Breast epithelium (tissue), 4 donors: ENCODE measurements at regions of chr2 and their contacts with region 1.

Region 1: DNA sequence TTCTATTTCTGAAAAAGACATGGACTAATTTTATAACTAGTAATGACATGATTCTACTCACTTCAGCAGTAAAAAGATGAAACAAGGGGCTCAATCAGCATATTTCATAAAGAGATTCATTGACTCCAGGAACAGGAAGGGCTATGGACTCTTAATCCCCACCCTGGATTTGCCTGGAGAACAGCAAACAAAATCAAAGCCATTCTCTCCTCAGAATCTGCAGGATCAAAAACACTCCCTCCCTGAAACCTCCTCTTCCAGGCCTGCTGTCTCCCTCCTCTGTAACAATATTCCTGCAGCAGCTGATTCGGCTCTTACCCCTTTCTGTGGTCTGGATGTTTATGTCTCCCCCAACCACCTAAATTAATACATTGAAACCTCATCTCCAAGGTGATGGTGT is 57.0 kb downstream of the ZC3H8 start:
- DNase-seq: no peak
- H3K4me3 ChIP-seq: no peak overlapping the region
- H3K27ac ChIP-seq: no peak overlapping the region
- H3K4me1 ChIP-seq: no peaks in the 10 kb centered on the region
- H3K27me3 ChIP-seq: no peaks in the 10 kb centered on the region
- CTCF ChIP-seq: no peak
- POLR2A ChIP-seq: no peak

Region 2: DNA sequence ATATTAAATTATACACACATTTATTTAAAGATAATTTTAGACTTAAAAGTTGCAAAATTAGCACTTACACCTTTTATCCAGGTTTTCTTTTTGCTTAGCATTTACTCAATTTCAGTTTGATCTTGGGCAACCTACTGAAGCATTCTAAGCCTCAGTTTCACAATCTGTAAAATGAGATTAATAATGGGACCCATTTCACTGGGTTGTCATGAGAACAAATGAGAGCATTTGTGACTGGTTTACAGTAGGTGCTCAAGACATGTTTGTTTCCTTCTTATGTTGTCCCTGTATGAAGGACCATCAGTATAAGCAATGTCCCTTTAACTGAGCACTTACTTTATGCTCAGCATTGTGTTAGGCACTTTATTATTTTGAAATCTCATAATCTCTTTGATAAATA is 64.5 kb before region 1 on chr2:
- intact Hi-C with region 1: loop called (anchors 2 kb)
- DNase-seq: no peak
- H3K4me3 ChIP-seq: no peak overlapping the region
- H3K27ac ChIP-seq: no peak overlapping the region
- H3K4me1 ChIP-seq: no peaks in the 10 kb centered on the region
- H3K27me3 ChIP-seq: no peaks in the 10 kb centered on the region
- CTCF ChIP-seq: no peak
- POLR2A ChIP-seq: no peak

Region 3: DNA sequence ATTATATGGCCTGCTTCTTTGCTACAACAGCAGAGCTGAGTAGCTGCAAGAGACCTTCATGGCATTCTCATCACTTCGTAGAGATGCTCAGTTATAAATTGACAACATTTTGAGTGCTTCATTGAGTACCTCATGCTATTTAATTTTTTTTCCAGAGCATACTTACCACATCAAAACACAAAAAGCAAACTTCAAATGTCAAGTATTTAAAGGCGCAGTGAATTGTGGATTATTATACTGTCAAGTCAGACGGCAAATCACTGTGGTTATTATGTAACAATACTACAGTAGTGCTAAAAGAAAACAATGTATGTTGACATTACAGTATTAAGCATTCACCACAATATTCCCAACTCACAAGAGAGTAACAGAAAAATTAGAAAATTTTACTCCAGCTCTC is 44.5 kb after region 1 on chr2:
- intact Hi-C with region 1: no loop called
- DNase-seq: no peak
- H3K4me3 ChIP-seq: no peak overlapping the region
- H3K27ac ChIP-seq: no peak overlapping the region
- H3K4me1 ChIP-seq: no peaks in the 10 kb centered on the region
- H3K27me3 ChIP-seq: no peaks in the 10 kb centered on the region
- CTCF ChIP-seq: no peak
- POLR2A ChIP-seq: no peak